ENCODE measurements at regions of chr4 and their contacts with region 1.

Region 1: GRCh38 chr4:55184600-55185523 is 59.5 kb upstream of the KDR start:
- DNase-seq: peak in 1 of 2 experiments; percentile 71
- H3K4me3 ChIP-seq: no peak overlapping the region
- H3K27ac ChIP-seq: no peak overlapping the region
- H3K4me1 ChIP-seq: peaks cover 6 to 22% (median 13%) of the 10 kb centered on the region in 4 experiments; a peak in 6 of 7 replicates
- H3K27me3 ChIP-seq: no peaks in the 10 kb centered on the region
- CTCF ChIP-seq: peak; percentile 66 to 77 (median 69)
- EP300 ChIP-seq: no peak
- POLR2A ChIP-seq: no peak
- RAD21 ChIP-seq: peak; percentile 73 to 81

Region 2: DNA sequence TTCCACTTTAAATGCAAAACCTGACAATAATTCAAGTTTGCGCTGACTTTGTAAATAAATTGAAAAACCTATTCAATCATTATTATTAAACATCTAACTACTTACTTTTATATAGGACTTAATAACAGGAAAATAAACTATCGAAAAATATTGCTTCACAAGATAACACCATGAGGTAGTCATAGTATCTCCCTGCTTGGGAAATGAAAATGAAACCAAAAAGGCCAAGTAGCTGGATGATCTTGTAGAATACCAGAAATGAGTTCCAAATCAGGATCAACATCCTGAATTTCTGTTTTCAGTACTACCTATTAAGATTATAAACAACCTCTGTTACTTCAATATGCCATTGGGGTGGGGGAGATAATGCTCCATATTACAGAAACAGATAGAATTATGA is 1179.4 kb before region 1 on chr4:
- CTCF ChIA-PET with region 1: no interaction called
- POLR2A ChIA-PET with region 1: no interaction called
- DNase-seq: no peak
- H3K4me3 ChIP-seq: no peak overlapping the region
- H3K27ac ChIP-seq: no peak overlapping the region
- H3K4me1 ChIP-seq: peaks cover 0 to 3% (median 2%) of the 10 kb centered on the region in 4 experiments; a peak in 5 of 7 replicates
- H3K27me3 ChIP-seq: no peaks in the 10 kb centered on the region
- CTCF ChIP-seq: no peak
- EP300 ChIP-seq: no peak
- POLR2A ChIP-seq: no peak
- RAD21 ChIP-seq: no peak

Region 3: DNA sequence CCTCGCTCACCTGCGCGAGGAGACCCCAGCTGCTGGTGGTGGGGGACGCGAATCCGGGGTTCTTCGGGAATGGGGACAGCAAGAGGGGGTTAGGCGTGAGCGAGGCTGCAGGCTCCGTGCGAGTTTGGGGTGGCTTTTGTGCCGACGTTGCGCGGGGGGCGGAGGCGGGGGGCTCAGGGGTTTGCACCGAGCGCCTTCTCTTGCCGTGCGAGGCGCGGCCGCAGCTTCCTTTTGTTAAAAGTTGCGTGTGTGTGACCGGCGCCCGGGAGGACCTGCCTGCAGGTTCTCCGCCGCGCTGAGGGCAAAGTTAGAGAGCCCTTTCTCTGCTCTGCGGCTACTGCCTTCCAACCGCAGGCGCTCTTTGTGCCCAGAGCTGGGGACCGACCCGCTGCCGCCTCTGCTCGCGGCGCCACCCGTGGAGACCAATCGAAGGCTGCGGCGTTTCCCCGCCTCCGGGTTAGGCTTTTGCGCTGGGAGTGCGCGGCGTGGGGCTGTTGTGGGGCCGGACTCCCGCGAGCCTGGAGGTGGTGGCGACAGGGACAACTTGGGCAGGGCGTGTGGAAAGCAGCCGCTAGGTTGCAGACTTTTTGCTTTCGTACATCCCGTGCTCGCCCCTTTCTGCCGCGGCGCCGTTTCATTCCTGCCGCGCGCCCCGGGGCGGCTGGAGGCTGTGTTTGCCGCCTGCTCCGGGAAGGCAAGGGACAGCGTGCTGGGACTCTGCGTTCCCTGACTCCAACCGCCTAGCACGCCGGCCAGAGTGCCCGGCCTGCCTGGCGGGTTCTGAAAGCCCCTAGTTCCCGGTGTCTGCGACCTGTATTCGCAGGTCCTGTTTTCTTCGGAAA is 526.4 kb before region 1 on chr4:
- CTCF ChIA-PET with region 1: no interaction called
- POLR2A ChIA-PET with region 1: no interaction called
- DNase-seq: peak in 1 of 2 experiments; percentile 78
- H3K4me3 ChIP-seq: peak overlapping the region; percentile 79 to 88 (median 82)
- H3K27ac ChIP-seq: peak overlapping the region; percentile 38; the same call in 1 of the 2 replicates
- H3K4me1 ChIP-seq: peaks cover 6 to 8% (median 7%) of the 10 kb centered on the region in 4 experiments; a peak in 6 of 7 replicates
- H3K27me3 ChIP-seq: peaks cover 3 to 32% (median 24%) of the 10 kb centered on the region in 4 experiments
- CTCF ChIP-seq: peak in 2 of 3 experiments; percentile 23 to 24; a peak in 2 of 4 replicates
- EP300 ChIP-seq: no peak
- POLR2A ChIP-seq: peak in 1 of 2 experiments; percentile 27; a peak in 2 of 3 replicates
- RAD21 ChIP-seq: peak; percentile 4 to 7; a peak in 2 of 4 replicates

Region 4: GRCh38 chr4:55125087-55125721 is 59.7 kb before region 1 on chr4 and contains the start of gene KDR:
- CTCF ChIA-PET with region 1: interaction called, 23 read pairs
- POLR2A ChIA-PET with region 1: interaction called, 5 read pairs
- DNase-seq: peak in 1 of 2 experiments; percentile 91
- H3K4me3 ChIP-seq: peak within 1 kb of the TSS; percentile 57 to 92 (median 84)
- H3K27ac ChIP-seq: no peak within 1 kb of the TSS
- H3K4me1 ChIP-seq: peaks cover 0 to 8% (median 4%) of the 10 kb centered on the region in 4 experiments; a peak in 3 of 7 replicates
- H3K27me3 ChIP-seq: peaks cover 0 to 6% (median 0%) of the 10 kb centered on the region in 4 experiments; a peak in 3 of 7 replicates
- CTCF ChIP-seq: no peak
- EP300 ChIP-seq: no peak
- POLR2A ChIP-seq: peak in 1 of 2 experiments; percentile 84; a peak in 2 of 3 replicates
- RAD21 ChIP-seq: no peak
- total RNA-seq, gene KDR: 98.1 and 106 TPM in 2 replicates

Region 5: DNA sequence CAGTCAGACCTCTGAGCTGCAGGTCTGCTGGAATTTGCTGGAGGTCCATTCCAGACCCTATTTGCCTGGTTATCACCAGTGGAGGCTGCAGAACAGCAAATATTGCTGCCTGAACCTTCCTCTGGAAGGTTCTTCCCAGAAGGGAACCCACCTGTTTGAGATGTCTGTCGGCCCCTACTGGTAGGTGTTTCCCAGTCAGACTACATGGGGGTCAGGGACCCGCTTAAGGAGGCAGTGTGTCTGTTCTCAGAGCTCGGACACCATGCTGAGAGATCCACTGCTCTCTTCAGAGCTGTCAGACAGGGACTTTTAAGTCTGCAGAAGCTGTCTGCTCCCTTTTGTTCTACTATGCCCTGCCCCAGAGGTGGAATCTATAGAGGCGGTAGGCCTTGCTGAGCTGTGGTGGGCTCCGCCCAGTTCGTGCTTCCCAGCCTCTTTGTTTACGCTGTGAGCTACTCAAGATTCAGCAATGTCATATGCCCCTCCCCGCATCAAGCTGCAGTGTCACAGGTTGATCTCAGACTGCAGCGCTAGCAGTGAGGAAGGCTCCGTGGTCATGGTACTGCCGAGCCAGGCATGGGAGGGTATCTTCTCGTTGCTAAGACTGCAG is 15.4 kb before region 1 on chr4:
- CTCF ChIA-PET with region 1: interaction called, 50 read pairs
- POLR2A ChIA-PET with region 1: no interaction called
- DNase-seq: no peak
- H3K4me3 ChIP-seq: no peak overlapping the region
- H3K27ac ChIP-seq: no peak overlapping the region
- H3K4me1 ChIP-seq: peaks cover 0 to 4% (median 0%) of the 10 kb centered on the region in 4 experiments; a peak in 2 of 7 replicates
- H3K27me3 ChIP-seq: no peaks in the 10 kb centered on the region
- CTCF ChIP-seq: peak; percentile 3 to 30 (median 7); a peak in 3 of 4 replicates
- EP300 ChIP-seq: no peak
- POLR2A ChIP-seq: no peak
- RAD21 ChIP-seq: peak; percentile 14 to 24; a peak in 2 of 4 replicates

Region 6: DNA sequence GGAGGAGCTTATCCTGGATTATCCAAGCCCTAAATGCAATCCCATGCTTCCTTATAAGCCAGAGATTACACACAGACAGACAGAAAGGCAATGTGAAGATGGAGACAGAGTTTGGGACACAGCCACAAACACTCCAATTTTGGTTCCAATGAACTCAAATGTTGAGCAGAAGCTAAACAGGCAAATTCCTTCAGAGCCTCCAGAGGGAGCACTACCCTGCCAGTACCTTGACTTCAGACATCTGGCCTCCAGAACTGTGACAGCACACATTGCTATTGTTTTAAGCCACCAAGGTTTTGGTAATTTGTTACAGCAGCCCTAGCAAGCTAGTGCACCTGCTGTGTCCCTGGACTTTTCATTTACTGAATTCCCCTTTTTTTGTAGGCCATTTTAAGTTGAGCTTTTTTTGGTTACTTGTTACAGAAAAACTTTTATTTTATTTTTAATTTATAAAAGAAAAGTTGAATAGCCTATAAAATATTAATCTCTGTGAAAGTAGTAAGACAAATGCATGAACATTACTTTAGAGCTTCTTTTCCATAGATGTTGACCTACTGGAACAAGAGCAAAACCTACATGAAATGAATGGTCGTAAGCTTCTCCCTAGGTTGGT is 127.7 kb after region 1 on chr4:
- CTCF ChIA-PET with region 1: interaction called, 32 read pairs
- POLR2A ChIA-PET with region 1: interaction called, 3 read pairs
- DNase-seq: peak; percentile 23 to 50
- H3K4me3 ChIP-seq: no peak overlapping the region
- H3K27ac ChIP-seq: no peak overlapping the region
- H3K4me1 ChIP-seq: no peaks in the 10 kb centered on the region
- H3K27me3 ChIP-seq: no peaks in the 10 kb centered on the region
- CTCF ChIP-seq: peak; percentile 43 to 86 (median 64)
- EP300 ChIP-seq: no peak
- POLR2A ChIP-seq: no peak
- RAD21 ChIP-seq: peak; percentile 50 to 70

Region 7: DNA sequence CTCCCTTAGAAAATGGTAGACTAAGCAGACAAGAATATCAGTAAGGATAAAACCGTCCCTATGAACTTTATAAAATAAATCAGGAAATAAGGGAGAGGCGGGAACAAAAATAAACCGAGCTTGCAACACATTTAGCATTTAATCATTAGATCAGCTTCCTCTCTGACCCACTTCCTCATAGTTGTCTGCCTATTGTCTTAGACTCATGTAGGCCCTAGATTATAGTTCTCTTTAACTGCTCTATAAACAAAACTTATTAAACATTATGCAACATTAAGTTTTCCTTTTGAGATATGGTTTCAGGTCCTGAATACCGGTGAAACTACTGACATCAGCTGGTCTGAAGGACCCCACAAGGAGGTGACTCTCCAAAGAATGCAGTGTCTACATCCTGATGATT is 145.4 kb after region 1 on chr4:
- CTCF ChIA-PET with region 1: interaction called, 12 read pairs
- POLR2A ChIA-PET with region 1: no interaction called
- DNase-seq: no peak
- H3K4me3 ChIP-seq: no peak overlapping the region
- H3K27ac ChIP-seq: no peak overlapping the region
- H3K4me1 ChIP-seq: no peaks in the 10 kb centered on the region
- H3K27me3 ChIP-seq: no peaks in the 10 kb centered on the region
- CTCF ChIP-seq: no peak
- EP300 ChIP-seq: no peak
- POLR2A ChIP-seq: no peak
- RAD21 ChIP-seq: no peak

Region 8: GRCh38 chr4:55675196-55675793 is 490.4 kb after region 1 on chr4:
- CTCF ChIA-PET with region 1: no interaction called
- POLR2A ChIA-PET with region 1: no interaction called
- DNase-seq: no peak
- H3K4me3 ChIP-seq: no peak overlapping the region
- H3K27ac ChIP-seq: no peak overlapping the region
- H3K4me1 ChIP-seq: peaks cover 0 to 4% (median 0%) of the 10 kb centered on the region in 4 experiments; a peak in 2 of 7 replicates
- H3K27me3 ChIP-seq: no peaks in the 10 kb centered on the region
- CTCF ChIP-seq: no peak
- EP300 ChIP-seq: no peak
- POLR2A ChIP-seq: no peak
- RAD21 ChIP-seq: no peak

Measured in H1 (cell line).